Activated CD4-positive, alpha-beta T cell treated with anti-CD3 and anti-CD28 coated beads, Interleukin-2, amount 10 ng/mL, durations not matched to agents 24 days and 14 days (primary cell): ENCODE measurements at regions of chr1 and their contacts with region 1.

Region 1: DNA sequence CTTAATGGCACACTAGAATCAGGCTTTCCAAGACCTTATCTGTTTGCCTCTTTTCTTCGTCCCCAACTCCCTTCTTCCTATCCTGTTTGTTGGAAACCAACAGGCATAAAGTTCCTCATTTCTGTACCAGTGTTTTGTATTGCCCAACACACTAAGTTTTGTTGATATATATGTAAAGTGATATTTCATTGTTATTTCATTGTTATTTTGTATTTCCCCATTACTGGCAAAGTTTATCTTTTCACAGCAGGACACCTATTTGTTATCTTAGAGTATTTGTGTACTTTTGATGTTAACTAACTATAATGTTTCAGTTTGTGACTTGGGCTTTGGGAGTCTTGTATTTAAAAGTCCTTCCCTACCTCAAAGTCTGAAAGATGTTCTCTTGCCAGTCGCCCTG is 27.1 kb downstream of the FAM20B start:
- DNase-seq: no peak
- H3K4me3 Mint-ChIP-seq: no peak overlapping the region
- H3K27ac Mint-ChIP-seq: no peak overlapping the region
- H3K4me1 Mint-ChIP-seq: peaks cover 2% of the 10 kb centered on the region
- H3K27me3 Mint-ChIP-seq: no peaks in the 10 kb centered on the region

Region 2: DNA sequence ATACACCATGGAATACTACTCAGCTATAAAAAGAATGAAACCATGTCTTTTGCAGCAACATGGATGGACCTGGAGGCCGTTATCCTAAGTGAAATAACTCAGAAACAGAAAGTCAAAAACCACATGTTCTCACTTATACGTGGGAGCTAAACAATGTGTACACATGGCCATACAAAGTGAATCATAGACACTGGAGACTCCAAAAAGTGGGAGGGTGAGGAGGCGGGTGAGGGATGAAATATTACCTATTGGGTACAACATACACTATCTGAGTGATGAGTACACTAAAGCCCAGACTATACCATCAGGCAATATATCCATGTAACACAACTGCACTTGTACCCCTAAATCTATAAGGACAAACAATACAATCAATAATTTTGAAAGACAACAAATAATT is 66.6 kb before region 1 on chr1:
- intact Hi-C with region 1: no loop called
- DNase-seq: no peak
- H3K4me3 Mint-ChIP-seq: no peak overlapping the region
- H3K27ac Mint-ChIP-seq: no peak overlapping the region
- H3K4me1 Mint-ChIP-seq: no peaks in the 10 kb centered on the region
- H3K27me3 Mint-ChIP-seq: peaks cover 2% of the 10 kb centered on the region

Region 3: GRCh38 chr1:179034720-179035119 is 18.1 kb before region 1 on chr1:
- intact Hi-C with region 1: loop called (anchors 2 kb)
- DNase-seq: no peak
- H3K4me3 Mint-ChIP-seq: peak overlapping the region; percentile 62
- H3K27ac Mint-ChIP-seq: peak overlapping the region; percentile 91
- H3K4me1 Mint-ChIP-seq: peaks cover 70% of the 10 kb centered on the region
- H3K27me3 Mint-ChIP-seq: no peaks in the 10 kb centered on the region